Activated CD4-positive, alpha-beta T cell treated with anti-CD3 and anti-CD28 coated beads for 36 hours (primary cell): ENCODE measurements at regions of chr18 and their contacts with region 1.

Region 1: DNA sequence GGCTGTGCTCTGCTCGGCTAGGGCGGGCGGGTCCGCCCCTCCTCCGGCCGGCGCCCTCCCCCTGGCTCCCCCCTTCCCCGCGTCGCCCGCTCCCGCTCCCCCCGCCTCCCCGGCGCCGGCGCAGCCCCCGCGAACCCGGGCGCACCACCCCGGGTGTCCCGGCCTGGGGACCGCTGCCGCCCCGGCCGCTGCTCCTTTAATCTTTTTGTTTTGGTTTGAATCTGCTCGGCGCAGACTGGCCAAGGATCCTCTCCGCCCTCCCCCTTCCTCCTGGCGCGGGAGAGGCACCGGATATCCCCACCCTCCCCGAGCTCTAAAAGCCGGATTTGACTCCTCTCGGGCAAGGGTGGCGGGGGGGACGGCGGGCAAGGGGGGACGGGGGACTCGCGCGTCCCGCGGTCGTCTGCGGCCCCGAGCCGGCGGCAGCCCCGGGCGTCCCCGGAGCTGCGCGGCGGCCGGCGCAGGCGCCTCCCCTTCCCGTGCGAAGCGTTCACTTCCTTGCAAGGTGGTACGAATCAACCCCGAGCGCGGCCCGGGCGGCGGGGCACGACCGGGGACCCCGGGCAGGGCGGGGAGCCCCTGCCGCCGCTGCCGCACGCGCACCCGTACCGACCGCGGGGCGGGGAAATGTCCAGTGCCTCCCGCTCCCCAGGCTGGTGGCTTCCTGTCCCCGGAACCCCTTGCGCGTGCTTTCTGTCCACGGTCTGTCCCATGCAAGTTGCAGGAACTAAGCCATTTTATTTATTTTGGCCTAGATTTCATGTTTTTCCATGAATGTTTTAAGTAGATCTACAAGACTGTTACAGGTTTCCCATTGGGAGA is at the start of gene PTGR3:
- DNase-seq: peak; percentile 91
- ATAC-seq: peak; percentile 56
- H3K4me3 Mint-ChIP-seq: peak within 1 kb of the TSS; percentile 100
- H3K27ac Mint-ChIP-seq: peak within 1 kb of the TSS; percentile 97
- H3K4me1 Mint-ChIP-seq: peaks cover 54% of the 10 kb centered on the region
- H3K27me3 Mint-ChIP-seq: peaks cover 11% of the 10 kb centered on the region
- total RNA-seq, gene PTGR3: 14.4 to 23.3 TPM

Region 2: DNA sequence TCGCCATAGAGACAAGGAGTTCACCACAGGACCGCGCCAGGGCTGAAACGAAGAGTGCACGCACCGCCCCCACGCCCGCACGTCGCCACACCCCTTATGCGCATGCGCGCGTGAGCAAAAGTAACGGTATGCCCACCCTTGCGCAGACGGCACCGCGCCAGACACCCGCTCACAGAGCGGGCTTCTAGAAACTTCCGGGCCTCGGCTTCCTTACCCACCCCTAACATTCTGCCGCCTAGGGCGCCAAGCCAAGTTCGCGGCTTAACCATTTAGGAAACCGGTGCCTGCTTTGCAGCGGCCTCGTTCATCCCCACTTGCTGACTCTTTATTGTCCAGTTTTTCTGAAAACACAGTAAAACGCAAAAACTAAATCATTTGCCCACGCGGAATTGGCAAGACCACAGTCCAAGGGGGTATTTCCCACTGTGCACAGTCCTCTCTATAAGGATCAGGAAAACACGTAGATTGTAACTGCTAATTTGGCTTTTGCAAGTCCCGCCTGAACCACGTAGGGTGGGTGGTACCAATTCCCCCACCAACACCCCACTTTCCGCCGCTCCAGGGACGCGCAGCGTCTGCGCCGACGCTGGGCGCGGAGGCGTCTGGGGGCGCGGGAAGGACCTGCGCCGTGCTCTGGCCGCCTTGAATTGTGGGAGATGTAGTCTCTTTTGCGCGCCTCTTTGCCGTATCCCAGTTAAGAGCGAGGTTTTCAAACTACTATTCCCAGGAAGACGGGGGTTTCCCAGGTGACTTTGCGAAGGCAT is 1061.4 kb before region 1 on chr18 and contains the starts of genes FBXO15 and TIMM21:
- CTCF ChIA-PET with region 1: no interaction called
- POLR2A ChIA-PET with region 1: no interaction called
- intact Hi-C with region 1: loop called in 1 of 2 experiments (anchors 1 kb)
- DNase-seq: peak; percentile 98
- ATAC-seq: peak; percentile 91
- H3K4me3 Mint-ChIP-seq: peak within 1 kb of the TSS; percentile 97
- H3K27ac Mint-ChIP-seq: peak within 1 kb of the TSS; percentile 98
- H3K4me1 Mint-ChIP-seq: peaks cover 36% of the 10 kb centered on the region
- H3K27me3 Mint-ChIP-seq: no peaks in the 10 kb centered on the region
- total RNA-seq, gene FBXO15: 1.4 to 1.6 TPM
- total RNA-seq, gene TIMM21: 36.9 to 52.8 TPM

Region 3: GRCh38 chr18:74597662-74598349 is 611.5 kb before region 1 on chr18 and contains the start of gene ZNF407:
- CTCF ChIA-PET with region 1: no interaction called
- POLR2A ChIA-PET with region 1: interaction called, 5 read pairs
- intact Hi-C with region 1: loop called (anchors 1 to 2 kb)
- DNase-seq: peak; percentile 90
- ATAC-seq: peak; percentile 79
- H3K4me3 Mint-ChIP-seq: peak within 1 kb of the TSS; percentile 86
- H3K27ac Mint-ChIP-seq: peak within 1 kb of the TSS; percentile 99
- H3K4me1 Mint-ChIP-seq: peaks cover 40% of the 10 kb centered on the region
- H3K27me3 Mint-ChIP-seq: no peaks in the 10 kb centered on the region
- total RNA-seq, gene ZNF407: 11.4 TPM

Region 4: DNA sequence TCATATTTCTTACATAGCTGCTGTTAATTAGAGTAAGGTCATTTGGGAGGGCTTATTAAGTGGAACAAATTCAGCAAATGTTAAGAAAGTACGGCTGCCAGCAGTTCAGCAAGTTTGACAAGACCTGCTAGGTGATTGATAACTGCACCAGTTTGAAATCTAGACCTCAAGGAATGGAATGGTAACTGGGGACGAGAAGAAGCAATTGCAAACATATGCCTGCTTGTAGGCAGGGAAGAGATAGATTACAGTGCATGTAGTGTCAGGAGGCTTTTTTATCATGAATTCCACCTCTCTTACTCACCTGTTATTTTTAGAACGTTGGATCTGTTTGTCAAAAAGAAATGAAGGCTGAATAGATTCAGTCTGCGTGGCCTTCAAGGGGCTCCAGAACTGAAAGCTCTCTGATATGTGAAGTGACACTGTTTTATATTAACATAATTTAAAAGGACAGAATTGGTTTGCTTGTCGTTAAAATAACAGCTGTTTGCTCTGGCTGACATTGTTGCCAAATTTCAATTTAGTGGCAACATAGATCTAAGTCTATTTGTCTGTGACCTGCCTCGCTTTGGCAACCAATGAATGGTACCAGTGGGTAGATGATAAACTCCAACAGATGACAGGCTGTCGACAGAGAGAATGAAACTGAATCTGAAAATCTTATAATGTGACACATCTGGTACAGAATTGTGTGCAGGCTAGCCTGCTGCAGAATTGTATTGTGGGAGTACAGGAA is 412.3 kb before region 1 on chr18:
- CTCF ChIA-PET with region 1: no interaction called
- POLR2A ChIA-PET with region 1: no interaction called
- intact Hi-C with region 1: loop called in 1 of 2 experiments (anchors 5 kb)
- DNase-seq: peak; percentile 38
- ATAC-seq: peak; percentile 99
- H3K4me3 Mint-ChIP-seq: no peak overlapping the region
- H3K27ac Mint-ChIP-seq: no peak overlapping the region
- H3K4me1 Mint-ChIP-seq: peaks cover 20% of the 10 kb centered on the region
- H3K27me3 Mint-ChIP-seq: no peaks in the 10 kb centered on the region

Region 5: GRCh38 chr18:74994502-74995419 is 214.6 kb before region 1 on chr18:
- CTCF ChIA-PET with region 1: no interaction called
- POLR2A ChIA-PET with region 1: interaction called, 3 read pairs
- intact Hi-C with region 1: loop called (anchors 5 to 10 kb)
- DNase-seq: peak; percentile 38
- ATAC-seq: peak; percentile 84
- H3K4me3 Mint-ChIP-seq: peak overlapping the region; percentile 45
- H3K27ac Mint-ChIP-seq: peak overlapping the region; percentile 65
- H3K4me1 Mint-ChIP-seq: peaks cover 45% of the 10 kb centered on the region
- H3K27me3 Mint-ChIP-seq: no peaks in the 10 kb centered on the region

Region 6: DNA sequence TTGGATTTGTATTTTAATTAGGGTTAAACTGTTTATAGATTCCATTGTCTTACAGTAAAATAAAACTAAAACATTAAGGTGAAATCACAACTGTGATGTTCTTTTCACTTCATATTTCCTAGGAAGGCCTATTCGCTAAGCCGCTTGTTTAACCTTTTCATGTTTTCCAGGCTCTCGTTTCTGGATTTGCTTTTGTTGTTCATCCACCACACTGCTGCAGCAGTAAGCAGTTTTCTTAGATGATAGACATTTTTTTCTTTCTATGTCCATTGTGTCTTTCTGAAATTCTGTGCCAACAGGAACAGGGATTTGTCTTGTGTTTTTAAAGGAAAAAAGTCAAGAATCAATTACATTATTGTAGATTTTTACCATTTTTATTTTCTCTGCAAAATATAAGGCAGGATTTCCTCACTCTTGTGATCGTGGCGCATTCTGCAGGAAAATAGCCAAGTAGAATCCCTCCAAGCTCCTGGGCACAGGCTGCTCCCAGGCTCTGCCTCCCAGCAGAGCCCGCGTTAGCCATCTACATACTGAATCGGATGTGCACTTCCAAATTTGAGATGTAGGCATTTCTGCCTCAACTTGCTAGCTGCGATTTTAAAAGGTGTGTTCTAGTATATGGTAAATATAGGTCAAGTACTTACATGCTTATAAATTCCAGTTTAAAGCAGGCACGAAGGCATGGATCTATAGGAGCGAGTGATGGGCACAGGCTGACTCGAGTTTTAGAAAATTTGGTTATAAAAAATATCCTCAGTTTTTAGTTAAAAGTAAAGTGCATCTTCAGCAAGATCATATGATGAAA is 11.4 kb after region 1 on chr18:
- CTCF ChIA-PET with region 1: interaction called, 4 read pairs
- POLR2A ChIA-PET with region 1: no interaction called
- intact Hi-C with region 1: loop called in 1 of 2 experiments (anchors 1 kb)
- DNase-seq: no peak
- ATAC-seq: no peak
- H3K4me3 Mint-ChIP-seq: no peak overlapping the region
- H3K27ac Mint-ChIP-seq: no peak overlapping the region
- H3K4me1 Mint-ChIP-seq: peaks cover 58% of the 10 kb centered on the region
- H3K27me3 Mint-ChIP-seq: no peaks in the 10 kb centered on the region

Region 7: GRCh38 chr18:76195601-76196000 is 986.3 kb after region 1 on chr18:
- CTCF ChIA-PET with region 1: no interaction called
- POLR2A ChIA-PET with region 1: no interaction called
- intact Hi-C with region 1: no loop called
- DNase-seq: no peak
- ATAC-seq: no peak
- H3K4me3 Mint-ChIP-seq: no peak overlapping the region
- H3K27ac Mint-ChIP-seq: no peak overlapping the region
- H3K4me1 Mint-ChIP-seq: no peaks in the 10 kb centered on the region
- H3K27me3 Mint-ChIP-seq: peaks cover 14% of the 10 kb centered on the region

Region 8: GRCh38 chr18:76374330-76375281 is 1165.3 kb after region 1 on chr18:
- CTCF ChIA-PET with region 1: no interaction called
- POLR2A ChIA-PET with region 1: no interaction called
- intact Hi-C with region 1: loop called (anchors 2 to 5 kb)
- DNase-seq: peak; percentile 72
- ATAC-seq: peak; percentile 69
- H3K4me3 Mint-ChIP-seq: peak overlapping the region; percentile 2
- H3K27ac Mint-ChIP-seq: peak overlapping the region; percentile 82
- H3K4me1 Mint-ChIP-seq: peaks cover 50% of the 10 kb centered on the region
- H3K27me3 Mint-ChIP-seq: no peaks in the 10 kb centered on the region